PC-3 (cell line): ENCODE measurements at regions of chr20 and their contacts with region 1.

Region 1: DNA sequence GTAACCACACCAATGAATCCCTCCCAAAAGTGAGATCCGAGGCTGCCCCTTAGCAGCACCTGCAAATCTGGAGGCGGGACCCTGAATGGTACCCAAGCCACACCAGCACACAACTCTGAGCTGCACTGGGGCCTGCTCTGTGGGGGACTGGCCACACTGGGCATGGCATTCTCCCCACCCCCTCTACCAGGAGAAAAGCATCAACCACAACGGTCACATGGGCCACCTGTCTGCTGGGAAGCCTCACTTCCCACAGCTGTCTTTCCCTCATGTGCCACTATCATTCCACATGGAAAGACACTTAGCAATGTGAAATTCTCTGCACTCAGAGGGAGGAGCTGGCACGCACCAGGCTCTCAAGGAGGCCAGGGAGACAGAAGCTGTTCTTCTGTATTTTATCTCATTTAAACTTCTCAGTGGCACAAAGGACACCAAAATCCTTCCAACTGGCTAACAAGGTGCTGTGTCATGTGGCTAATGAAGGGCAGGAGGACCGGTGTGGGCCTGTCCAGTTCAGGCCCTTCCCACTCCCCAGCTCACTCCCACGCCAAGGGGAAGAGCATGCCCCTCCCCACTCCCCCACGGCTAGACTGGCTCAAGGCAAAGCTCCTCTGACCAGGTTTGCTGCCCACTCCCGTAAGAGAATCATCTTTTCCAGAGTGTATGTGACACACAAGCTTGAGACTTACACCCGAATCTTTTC is 19.0 kb downstream of the YTHDF1 start:
- DNase-seq: no peak
- ATAC-seq: peak; percentile 19; the same call in 1 of the 2 replicates
- H3K4me3 ChIP-seq: no peak overlapping the region
- H3K27ac ChIP-seq: peak overlapping the region; percentile 41
- H3K4me1 ChIP-seq: peaks cover 31% of the 10 kb centered on the region
- H3K27me3 ChIP-seq: no peaks in the 10 kb centered on the region
- CTCF ChIP-seq: no peak

Region 2: DNA sequence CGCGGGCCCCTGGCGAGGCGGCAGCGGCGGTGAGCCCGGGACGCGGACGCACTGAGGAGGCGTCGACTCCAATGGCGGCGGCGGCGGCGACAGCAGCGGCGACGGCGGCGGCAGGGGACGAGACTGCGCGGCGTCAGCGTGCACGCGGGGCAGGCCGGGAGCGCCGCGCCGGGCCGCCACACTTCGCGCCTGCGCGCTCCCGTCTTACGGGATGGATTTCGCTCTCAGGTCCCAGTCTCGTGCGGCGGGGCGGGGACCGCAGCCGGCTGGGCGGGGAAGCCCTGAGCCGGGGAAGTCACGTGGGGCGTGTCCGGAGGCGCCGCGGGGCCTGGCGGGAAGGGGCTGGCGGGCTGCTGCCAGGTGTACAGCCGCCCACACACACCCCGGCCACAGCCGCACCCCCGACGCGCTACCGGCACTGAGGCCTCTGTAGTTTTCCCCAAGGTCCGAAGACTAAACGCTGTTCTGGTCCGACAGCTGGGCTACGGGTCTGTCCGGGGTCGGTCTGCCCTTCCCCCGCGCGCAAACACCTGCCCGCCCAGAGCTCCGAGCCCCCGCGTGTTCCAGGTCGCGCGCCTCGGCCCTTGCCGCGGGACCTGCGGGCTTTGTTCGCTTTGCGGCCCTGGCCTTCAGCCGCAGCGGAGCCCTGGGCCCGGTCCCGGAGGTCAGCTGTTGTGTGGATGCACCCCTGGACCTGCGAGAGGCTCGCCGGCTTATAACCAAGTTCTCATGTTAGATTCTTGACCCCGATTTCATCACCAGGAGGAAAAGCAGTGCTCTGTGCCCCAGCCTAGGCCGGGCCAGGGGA is 19.3 kb after region 1 on chr20 and contains the start of gene YTHDF1:
- CTCF ChIA-PET with region 1: interaction called, 4 read pairs
- POLR2A ChIA-PET with region 1: no interaction called
- intact Hi-C with region 1: loop called (anchors 1 kb)
- DNase-seq: peak; percentile 97
- ATAC-seq: peak; percentile 89
- H3K4me3 ChIP-seq: peak within 1 kb of the TSS; percentile 100
- H3K27ac ChIP-seq: peak within 1 kb of the TSS; percentile 31
- H3K4me1 ChIP-seq: peaks cover 36% of the 10 kb centered on the region
- H3K27me3 ChIP-seq: no peaks in the 10 kb centered on the region
- CTCF ChIP-seq: no peak
- total RNA-seq, gene YTHDF1: 30.0 and 34.0 TPM in 2 replicates

Region 3: GRCh38 chr20:63223221-63224207 is 26.6 kb after region 1 on chr20:
- CTCF ChIA-PET with region 1: interaction called, 14 read pairs
- POLR2A ChIA-PET with region 1: no interaction called
- intact Hi-C with region 1: no loop called
- DNase-seq: peak; percentile 61
- ATAC-seq: peak; percentile 59
- H3K4me3 ChIP-seq: no peak overlapping the region
- H3K27ac ChIP-seq: no peak overlapping the region
- H3K4me1 ChIP-seq: peaks cover 9% of the 10 kb centered on the region; the same call in 1 of the 2 replicates
- H3K27me3 ChIP-seq: no peaks in the 10 kb centered on the region
- CTCF ChIP-seq: peak; percentile 95